A549 (cell line): ENCODE measurements at regions of chr11 and their contacts with region 1.

Region 1: GRCh38 chr11:46593550-46594373 is at the start of gene AMBRA1:
- DNase-seq: peak; percentile 60 to 93
- ATAC-seq: peak; percentile 87 to 90
- H3K4me3 ChIP-seq: peak within 1 kb of the TSS; percentile 75
- H3K27ac ChIP-seq: peak within 1 kb of the TSS; percentile 83 to 91
- H3K4me1 ChIP-seq: peaks cover 25% of the 10 kb centered on the region
- CTCF ChIP-seq: no peak
- EP300 ChIP-seq: no peak
- POLR2A ChIP-seq: peak; percentile 57
- RAD21 ChIP-seq: no peak; a peak in 2 of 5 replicates
- polyA plus RNA-seq, gene AMBRA1: 11.5 and 11.9 TPM in 2 replicates

Region 2: DNA sequence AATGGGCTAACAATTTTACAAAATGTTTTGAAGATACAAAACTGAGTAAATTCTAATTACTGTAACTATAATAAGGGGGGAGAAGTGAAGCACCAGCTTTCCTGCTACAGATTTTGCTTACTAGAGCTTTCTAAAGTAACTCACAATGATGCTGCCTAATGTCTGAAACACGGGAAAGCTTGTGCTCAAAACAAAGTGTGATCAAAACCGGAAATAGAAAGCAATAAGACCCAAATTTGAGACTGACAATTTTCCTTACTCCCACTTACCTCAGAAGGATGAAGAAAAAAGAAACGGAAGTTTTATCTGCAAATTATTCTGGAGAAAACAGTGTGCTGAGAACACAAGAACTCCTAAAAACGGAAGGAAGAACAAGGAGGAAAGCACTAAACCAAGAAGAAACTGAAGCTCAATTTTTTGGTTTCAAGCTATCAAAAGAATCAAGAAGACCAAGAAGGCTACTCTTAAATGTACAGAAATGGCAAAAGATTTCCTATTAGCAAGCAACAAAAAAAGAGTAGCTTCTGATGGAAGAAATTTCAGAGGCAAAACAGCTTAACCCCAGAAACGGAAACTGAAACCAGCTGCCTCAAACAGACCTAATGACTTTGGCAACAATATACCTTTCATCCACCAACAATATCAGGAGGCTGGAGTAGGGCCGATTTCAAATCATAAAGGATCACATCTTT is 33.3 kb before region 1 on chr11:
- CTCF ChIA-PET with region 1: interaction called, 3 read pairs
- POLR2A ChIA-PET with region 1: interaction called, 10 read pairs
- DNase-seq: no peak
- ATAC-seq: peak; percentile 27 to 44; a peak in 4 of 6 replicates
- H3K4me3 ChIP-seq: peak overlapping the region; percentile 41
- H3K27ac ChIP-seq: peak overlapping the region; percentile 73 to 79
- H3K4me1 ChIP-seq: peaks cover 81% of the 10 kb centered on the region
- CTCF ChIP-seq: no peak
- EP300 ChIP-seq: no peak
- POLR2A ChIP-seq: no peak
- RAD21 ChIP-seq: no peak

Region 3: GRCh38 chr11:46616998-46617675 is 23.4 kb after region 1 on chr11 and contains the starts of genes ATG13 and HARBI1:
- CTCF ChIA-PET with region 1: interaction called, 10 read pairs
- POLR2A ChIA-PET with region 1: interaction called, 3 read pairs
- DNase-seq: peak; percentile 86 to 92
- ATAC-seq: peak; percentile 98
- H3K4me3 ChIP-seq: peak within 1 kb of the TSS; percentile 96
- H3K27ac ChIP-seq: peak within 1 kb of the TSS; percentile 96 to 99
- H3K4me1 ChIP-seq: peaks cover 18% of the 10 kb centered on the region; the same call in 2 of the 3 replicates
- CTCF ChIP-seq: no peak
- EP300 ChIP-seq: no peak; a peak in 1 of 5 replicates
- POLR2A ChIP-seq: peak; percentile 85
- RAD21 ChIP-seq: no peak
- polyA plus RNA-seq, gene ATG13: 58.6 and 75.4 TPM in 2 replicates
- polyA plus RNA-seq, gene HARBI1: 5.6 and 6.2 TPM in 2 replicates

Region 4: GRCh38 chr11:46637546-46637945 is 43.8 kb after region 1 on chr11:
- CTCF ChIA-PET with region 1: no interaction called
- POLR2A ChIA-PET with region 1: no interaction called
- DNase-seq: no peak
- ATAC-seq: no peak
- H3K4me3 ChIP-seq: no peak overlapping the region
- H3K27ac ChIP-seq: no peak overlapping the region
- H3K4me1 ChIP-seq: 0 out of 3 replicates have a peak, but pooled peaks cover 4% of the 10 kb centered on the region
- CTCF ChIP-seq: no peak
- EP300 ChIP-seq: no peak
- POLR2A ChIP-seq: no peak
- RAD21 ChIP-seq: no peak